PC-3 (cell line): ENCODE measurements at regions of chr1 and their contacts with region 1.

Region 1: GRCh38 chr1:165114022-165114888 is 242.3 kb downstream of the LMX1A start:
- DNase-seq: peak; percentile 91
- ATAC-seq: peak; percentile 27
- H3K4me3 ChIP-seq: no peak overlapping the region
- H3K27ac ChIP-seq: no peak overlapping the region
- H3K4me1 ChIP-seq: peaks cover 14% of the 10 kb centered on the region
- H3K27me3 ChIP-seq: peaks cover 18% of the 10 kb centered on the region
- CTCF ChIP-seq: peak; percentile 95

Region 2: DNA sequence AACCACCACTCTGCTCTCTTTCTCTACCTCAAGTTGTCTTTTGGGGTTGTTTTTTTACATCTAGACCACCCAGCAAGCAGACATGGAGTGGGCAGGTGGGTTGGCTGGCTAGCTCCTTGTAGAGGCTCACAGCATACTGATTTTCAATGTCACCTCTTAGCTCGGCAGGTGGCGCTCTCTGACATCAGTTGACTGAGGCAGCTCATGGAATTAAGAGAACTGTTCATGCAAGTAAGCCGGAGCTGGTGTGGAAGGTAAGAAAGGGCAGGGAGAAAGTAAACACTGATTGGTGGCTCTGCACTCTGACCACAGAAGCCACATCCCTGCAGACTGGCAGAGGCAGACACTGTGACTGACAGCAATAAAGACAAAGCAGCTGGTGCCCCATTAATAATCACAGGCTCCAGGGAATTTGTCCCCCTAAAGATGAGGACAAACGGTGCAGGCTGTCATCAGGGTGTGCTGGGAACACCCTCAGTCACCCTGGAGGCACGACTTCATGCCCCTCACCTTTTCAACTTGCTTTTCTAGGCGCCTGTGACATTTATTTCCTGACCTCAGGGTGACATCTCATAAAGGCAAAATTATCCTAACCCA is 15.4 kb after region 1 on chr1:
- CTCF ChIA-PET with region 1: interaction called, 11 read pairs
- POLR2A ChIA-PET with region 1: no interaction called
- intact Hi-C with region 1: no loop called
- DNase-seq: peak; percentile 88
- ATAC-seq: peak; percentile 88
- H3K4me3 ChIP-seq: no peak overlapping the region
- H3K27ac ChIP-seq: no peak overlapping the region
- H3K4me1 ChIP-seq: peaks cover 5% of the 10 kb centered on the region; the same call in 1 of the 2 replicates
- H3K27me3 ChIP-seq: peaks cover 62% of the 10 kb centered on the region
- CTCF ChIP-seq: peak; percentile 93

Region 3: GRCh38 chr1:165367375-165367993 is 253.2 kb after region 1 on chr1:
- CTCF ChIA-PET with region 1: no interaction called
- POLR2A ChIA-PET with region 1: no interaction called
- intact Hi-C with region 1: loop called (anchors 10 kb)
- DNase-seq: peak; percentile 94
- ATAC-seq: peak; percentile 64
- H3K4me3 ChIP-seq: no peak overlapping the region
- H3K27ac ChIP-seq: no peak overlapping the region
- H3K4me1 ChIP-seq: peaks cover 16% of the 10 kb centered on the region
- H3K27me3 ChIP-seq: no peaks in the 10 kb centered on the region
- CTCF ChIP-seq: peak; percentile 98